ENCODE measurements at regions of chr1 and their contacts with region 1.

Region 1: DNA sequence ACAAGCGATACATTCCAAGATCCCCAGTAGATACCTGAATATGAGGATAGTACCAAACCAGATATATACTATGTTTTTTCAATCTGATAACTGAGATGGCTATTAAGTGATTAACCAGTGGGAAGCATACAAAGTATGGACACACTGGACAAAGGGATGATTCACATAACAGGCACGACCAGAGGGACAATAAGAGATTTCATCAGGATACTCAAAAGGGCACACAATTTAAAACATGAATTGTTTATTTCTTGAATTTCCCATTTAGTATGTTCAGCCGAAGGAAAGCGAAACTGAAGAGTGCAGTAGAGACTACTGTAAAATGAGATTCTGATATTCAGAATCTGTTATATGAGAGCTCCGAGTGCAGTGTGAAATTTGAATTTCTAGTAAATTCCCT is 10.6 kb downstream of the ZZZ3 start:
- DNase-seq: peak; percentile 48
- ATAC-seq: peak; percentile 40; the same call in 1 of the 2 replicates
- H3K4me3 ChIP-seq: no peak overlapping the region
- H3K27ac ChIP-seq: no peak overlapping the region
- H3K4me1 ChIP-seq: peaks cover 22% of the 10 kb centered on the region
- H3K27me3 ChIP-seq: no peaks in the 10 kb centered on the region
- CTCF ChIP-seq: no peak

Region 2: GRCh38 chr1:77438236-77438913 is 233.5 kb before region 1 on chr1:
- CTCF ChIA-PET with region 1: no interaction called
- POLR2A ChIA-PET with region 1: interaction called, 17 read pairs
- intact Hi-C with region 1: no loop called
- DNase-seq: no peak
- ATAC-seq: no peak
- H3K4me3 ChIP-seq: no peak overlapping the region
- H3K27ac ChIP-seq: no peak overlapping the region
- H3K4me1 ChIP-seq: 0 out of 2 replicates have a peak, but pooled peaks cover 4% of the 10 kb centered on the region
- H3K27me3 ChIP-seq: no peaks in the 10 kb centered on the region
- CTCF ChIP-seq: no peak

Region 3: DNA sequence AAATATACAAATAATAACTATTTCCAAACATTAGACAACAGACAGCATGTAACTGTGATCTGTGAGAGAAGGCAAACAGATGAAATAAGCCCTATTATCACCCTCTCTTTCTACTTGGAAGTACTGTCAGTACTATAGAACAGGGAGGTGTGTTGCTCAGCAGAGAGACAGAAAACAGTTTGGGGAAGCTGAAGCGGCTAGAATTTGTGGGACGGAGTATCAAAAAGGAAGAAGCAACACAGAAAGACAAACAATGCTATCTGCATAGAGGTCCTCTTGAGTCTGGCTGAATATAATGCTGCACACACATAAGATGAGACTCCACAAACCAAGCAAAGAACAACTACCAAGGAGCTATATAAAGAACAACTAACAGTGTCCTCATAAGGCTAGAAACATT is 48.8 kb before region 1 on chr1:
- CTCF ChIA-PET with region 1: no interaction called
- POLR2A ChIA-PET with region 1: no interaction called
- intact Hi-C with region 1: loop called (anchors 10 kb)
- DNase-seq: no peak
- ATAC-seq: no peak
- H3K4me3 ChIP-seq: no peak overlapping the region
- H3K27ac ChIP-seq: no peak overlapping the region
- H3K4me1 ChIP-seq: no peaks in the 10 kb centered on the region
- H3K27me3 ChIP-seq: no peaks in the 10 kb centered on the region
- CTCF ChIP-seq: no peak

Region 4: GRCh38 chr1:77768006-77768405 is 96.2 kb after region 1 on chr1:
- CTCF ChIA-PET with region 1: no interaction called
- POLR2A ChIA-PET with region 1: interaction called, 26 read pairs
- intact Hi-C with region 1: no loop called
- DNase-seq: no peak
- ATAC-seq: no peak
- H3K4me3 ChIP-seq: no peak overlapping the region
- H3K27ac ChIP-seq: no peak overlapping the region
- H3K4me1 ChIP-seq: no peaks in the 10 kb centered on the region
- H3K27me3 ChIP-seq: no peaks in the 10 kb centered on the region
- CTCF ChIP-seq: no peak